ENCODE measurements at regions of chr10 and their contacts with region 1.

Region 1: DNA sequence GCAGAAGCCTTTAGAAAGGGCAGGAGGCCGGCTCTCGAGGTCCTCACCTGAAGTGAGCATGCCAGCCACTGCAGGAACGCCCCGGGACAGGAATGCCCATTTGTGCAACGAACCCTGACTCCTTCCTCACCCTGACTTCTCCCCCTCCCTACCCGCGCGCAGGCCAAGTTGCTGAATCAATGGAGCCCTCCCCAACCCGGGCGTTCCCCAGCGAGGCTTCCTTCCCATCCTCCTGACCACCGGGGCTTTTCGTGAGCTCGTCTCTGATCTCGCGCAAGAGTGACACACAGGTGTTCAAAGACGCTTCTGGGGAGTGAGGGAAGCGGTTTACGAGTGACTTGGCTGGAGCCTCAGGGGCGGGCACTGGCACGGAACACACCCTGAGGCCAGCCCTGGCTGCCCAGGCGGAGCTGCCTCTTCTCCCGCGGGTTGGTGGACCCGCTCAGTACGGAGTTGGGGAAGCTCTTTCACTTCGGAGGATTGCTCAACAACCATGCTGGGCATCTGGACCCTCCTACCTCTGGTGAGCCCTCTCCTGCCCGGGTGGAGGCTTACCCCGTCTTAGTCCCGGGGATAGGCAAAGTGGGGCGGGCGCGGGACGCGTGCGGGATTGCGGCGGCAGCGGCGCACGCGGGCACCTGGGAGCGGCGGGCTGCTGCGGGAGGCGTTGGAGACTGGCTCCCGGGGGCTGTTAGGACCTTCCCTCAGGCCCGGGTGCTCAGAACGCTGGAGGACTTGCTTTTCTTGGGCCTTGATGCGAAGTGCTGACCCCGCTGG is at the start of gene FAS:
- DNase-seq: peak; percentile 94
- H3K4me3 Mint-ChIP-seq: peak within 1 kb of the TSS; percentile 96
- H3K27ac Mint-ChIP-seq: peak within 1 kb of the TSS; percentile 97
- H3K4me1 Mint-ChIP-seq: peaks cover 59% of the 10 kb centered on the region
- H3K27me3 Mint-ChIP-seq: no peaks in the 10 kb centered on the region
- total RNA-seq, gene FAS: 29.9 and 31.1 TPM in 2 replicates

Region 2: GRCh38 chr10:88791924-88792323 is 198.6 kb before region 1 on chr10:
- intact Hi-C with region 1: loop called (anchors 5 kb)
- DNase-seq: no peak
- H3K4me3 Mint-ChIP-seq: no peak overlapping the region
- H3K27ac Mint-ChIP-seq: no peak overlapping the region
- H3K4me1 Mint-ChIP-seq: peaks cover 24% of the 10 kb centered on the region
- H3K27me3 Mint-ChIP-seq: peaks cover 21% of the 10 kb centered on the region

Region 3: GRCh38 chr10:88880282-88881076 is 110.1 kb before region 1 on chr10:
- intact Hi-C with region 1: loop called (anchors 1 kb)
- DNase-seq: peak; percentile 92
- H3K4me3 Mint-ChIP-seq: peak overlapping the region; percentile 96
- H3K27ac Mint-ChIP-seq: peak overlapping the region; percentile 99
- H3K4me1 Mint-ChIP-seq: peaks cover 59% of the 10 kb centered on the region
- H3K27me3 Mint-ChIP-seq: no peaks in the 10 kb centered on the region

Region 4: DNA sequence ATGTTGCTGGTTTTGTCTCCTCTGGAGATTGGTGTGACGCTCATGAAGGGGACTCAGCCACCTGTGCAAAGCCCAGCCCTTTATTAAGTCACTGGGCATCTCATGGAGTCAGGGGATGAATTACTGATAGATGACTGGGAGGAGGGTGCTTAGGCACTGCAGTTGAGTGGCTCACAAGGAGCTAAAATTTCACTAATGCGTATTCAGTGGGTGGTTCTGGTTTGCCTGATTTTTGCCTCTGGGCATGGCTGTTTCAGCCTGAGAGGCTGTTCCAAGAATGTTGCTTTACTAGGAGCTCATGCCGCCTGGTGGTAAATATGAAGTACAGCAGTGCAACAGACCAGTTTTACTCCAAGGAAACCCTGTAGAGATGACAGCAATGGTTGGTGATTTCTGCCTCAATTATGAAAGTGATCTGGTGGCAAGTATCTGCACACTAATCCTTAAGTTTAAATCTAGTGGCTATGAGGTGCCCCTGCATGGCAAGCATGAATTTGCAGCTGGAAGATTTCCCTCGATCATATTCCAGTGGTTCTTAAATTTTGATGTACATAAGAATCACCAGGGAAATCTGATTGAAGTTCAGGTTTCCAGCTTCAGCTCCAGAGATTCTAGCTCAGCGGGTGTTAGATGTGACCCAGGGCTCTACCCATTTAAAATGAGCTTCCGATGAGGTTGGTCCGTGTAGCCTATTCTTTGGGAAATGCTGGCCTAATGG is 57.9 kb before region 1 on chr10:
- intact Hi-C with region 1: loop called (anchors 1 kb)
- DNase-seq: peak; percentile 83
- H3K4me3 Mint-ChIP-seq: no peak overlapping the region
- H3K27ac Mint-ChIP-seq: no peak overlapping the region
- H3K4me1 Mint-ChIP-seq: peaks cover 25% of the 10 kb centered on the region
- H3K27me3 Mint-ChIP-seq: no peaks in the 10 kb centered on the region

Region 5: GRCh38 chr10:88974446-88975376 is 15.9 kb before region 1 on chr10:
- intact Hi-C with region 1: loop called (anchors 2 kb)
- DNase-seq: no peak
- H3K4me3 Mint-ChIP-seq: peak overlapping the region; percentile 89
- H3K27ac Mint-ChIP-seq: peak overlapping the region; percentile 93
- H3K4me1 Mint-ChIP-seq: peaks cover 18% of the 10 kb centered on the region
- H3K27me3 Mint-ChIP-seq: peaks cover under 1% of the 10 kb centered on the region

Region 6: GRCh38 chr10:89029785-89030437 is 39.3 kb after region 1 on chr10:
- intact Hi-C with region 1: loop called (anchors 1 kb)
- DNase-seq: peak; percentile 90
- H3K4me3 Mint-ChIP-seq: no peak overlapping the region
- H3K27ac Mint-ChIP-seq: no peak overlapping the region
- H3K4me1 Mint-ChIP-seq: peaks cover 33% of the 10 kb centered on the region
- H3K27me3 Mint-ChIP-seq: no peaks in the 10 kb centered on the region

Measured in activated CD4-positive, alpha-beta T cell treated with anti-CD3 and anti-CD28 coated beads, Interleukin-2, amount 10 ng/mL, durations not matched to agents 24 days and 14 days (primary cell).